Calu3 (cell line): ENCODE measurements at regions of chr15 and their contacts with region 1.

Region 1: DNA sequence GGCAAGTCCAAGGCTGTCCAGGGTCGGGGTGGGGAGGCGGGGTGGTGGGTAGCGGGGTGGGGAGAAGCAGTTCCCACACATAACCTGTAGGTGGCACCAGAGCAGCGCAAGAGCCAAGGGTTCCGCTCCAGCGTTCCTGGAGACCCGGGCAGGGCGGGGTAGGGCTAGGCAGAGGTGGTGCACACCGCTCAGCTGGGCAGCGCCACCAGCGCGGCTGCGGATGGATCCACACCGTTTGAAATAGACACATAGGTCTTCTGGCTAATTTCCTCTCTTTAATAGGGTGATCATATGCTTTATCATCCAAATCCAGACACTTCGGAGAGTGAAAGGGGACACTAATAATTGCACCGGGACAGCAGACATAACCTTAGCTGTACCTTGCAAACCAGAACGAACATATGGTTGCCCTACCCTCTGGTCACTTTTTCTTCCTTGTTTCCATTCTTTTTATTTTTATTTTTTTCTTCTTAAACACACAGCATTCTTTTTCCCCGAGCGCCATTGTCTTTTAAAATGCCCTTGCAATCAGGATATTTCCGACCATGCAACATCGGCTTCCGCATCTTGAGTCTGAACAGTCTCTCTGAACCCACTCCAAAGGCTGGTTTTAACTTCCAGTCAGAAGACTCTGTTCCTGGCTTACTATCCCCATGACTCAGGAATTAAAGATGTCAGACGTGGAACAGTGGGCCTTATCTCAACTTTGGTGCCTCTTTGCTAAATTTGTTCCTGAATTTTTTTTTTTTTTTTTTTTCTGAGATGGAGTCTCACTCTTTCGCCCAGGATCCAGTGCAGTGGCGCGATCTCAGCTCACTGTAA is 12.5 kb upstream of the ZSCAN2 start:
- DNase-seq: peak; percentile 95
- H3K4me3 Mint-ChIP-seq: peak overlapping the region; percentile 32
- H3K27ac Mint-ChIP-seq: no peak overlapping the region
- H3K4me1 Mint-ChIP-seq: peaks cover 9% of the 10 kb centered on the region
- H3K27me3 Mint-ChIP-seq: no peaks in the 10 kb centered on the region
- CTCF ChIP-seq: peak; percentile 96

Region 2: GRCh38 chr15:84570164-84570735 is 18.0 kb before region 1 on chr15:
- CTCF ChIA-PET with region 1: interaction called, 7 read pairs
- intact Hi-C with region 1: loop called (anchors 1 kb)
- DNase-seq: peak; percentile 56
- H3K4me3 Mint-ChIP-seq: peak overlapping the region; percentile 94
- H3K27ac Mint-ChIP-seq: peak overlapping the region; percentile 21
- H3K4me1 Mint-ChIP-seq: peaks cover 11% of the 10 kb centered on the region
- H3K27me3 Mint-ChIP-seq: no peaks in the 10 kb centered on the region
- CTCF ChIP-seq: no peak

Region 3: DNA sequence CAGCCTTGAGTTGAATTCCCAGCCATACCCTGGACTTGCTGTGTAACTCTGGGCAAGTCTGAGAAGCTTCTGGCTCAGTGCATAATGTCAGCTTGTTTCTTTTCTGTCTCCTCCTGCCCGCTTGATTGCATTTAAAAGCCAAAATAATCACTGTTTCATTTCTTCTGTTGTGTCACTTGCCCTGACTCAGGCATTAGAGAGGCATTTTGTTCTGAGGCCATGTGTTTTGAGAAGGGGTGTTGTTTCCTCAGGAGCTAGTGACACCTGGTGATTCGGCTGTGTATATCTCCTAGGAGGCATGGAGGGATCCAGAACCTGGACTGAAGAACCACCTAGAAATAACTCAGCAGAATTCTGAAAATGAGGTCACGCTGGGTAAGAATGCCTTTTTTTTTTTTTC is 49.8 kb after region 1 on chr15:
- CTCF ChIA-PET with region 1: interaction called, 5 read pairs
- intact Hi-C with region 1: loop called (anchors 1 kb)
- DNase-seq: no peak
- H3K4me3 Mint-ChIP-seq: no peak overlapping the region
- H3K27ac Mint-ChIP-seq: no peak overlapping the region
- H3K4me1 Mint-ChIP-seq: peaks cover 14% of the 10 kb centered on the region
- H3K27me3 Mint-ChIP-seq: no peaks in the 10 kb centered on the region
- CTCF ChIP-seq: no peak

Region 4: GRCh38 chr15:84671211-84671610 is 82.9 kb after region 1 on chr15:
- CTCF ChIA-PET with region 1: no interaction called
- intact Hi-C with region 1: no loop called
- DNase-seq: no peak
- H3K4me3 Mint-ChIP-seq: no peak overlapping the region
- H3K27ac Mint-ChIP-seq: no peak overlapping the region
- H3K4me1 Mint-ChIP-seq: peaks cover 17% of the 10 kb centered on the region
- H3K27me3 Mint-ChIP-seq: no peaks in the 10 kb centered on the region
- CTCF ChIP-seq: no peak